ENCODE measurements at regions of chr16 and their contacts with region 1.

Region 1: GRCh38 chr16:71883849-71884638 is at the start of gene ZNF821:
- DNase-seq: peak; percentile 62 to 81 (median 68)
- ATAC-seq: peak; percentile 68
- H3K4me3 ChIP-seq: peak within 1 kb of the TSS; percentile 67
- H3K4me3 Mint-ChIP-seq: peak within 1 kb of the TSS; percentile 84 to 99 (median 96)
- H3K27ac ChIP-seq: peak within 1 kb of the TSS; percentile 84
- H3K27ac Mint-ChIP-seq: peak within 1 kb of the TSS; percentile 88 to 97 (median 95)
- H3K4me1 ChIP-seq: peaks cover 30 to 33% of the 10 kb centered on the region in 2 donors
- H3K4me1 Mint-ChIP-seq: peaks cover 44 to 56% (median 50%) of the 10 kb centered on the region in 7 donors
- H3K27me3 ChIP-seq: no peaks in the 10 kb centered on the region
- H3K27me3 Mint-ChIP-seq: peaks cover 0 to 20% (median 0%) of the 10 kb centered on the region in 5 donors
- total RNA-seq, gene ZNF821: 2.6 to 13.3 (median 7.0) TPM

Region 2: DNA sequence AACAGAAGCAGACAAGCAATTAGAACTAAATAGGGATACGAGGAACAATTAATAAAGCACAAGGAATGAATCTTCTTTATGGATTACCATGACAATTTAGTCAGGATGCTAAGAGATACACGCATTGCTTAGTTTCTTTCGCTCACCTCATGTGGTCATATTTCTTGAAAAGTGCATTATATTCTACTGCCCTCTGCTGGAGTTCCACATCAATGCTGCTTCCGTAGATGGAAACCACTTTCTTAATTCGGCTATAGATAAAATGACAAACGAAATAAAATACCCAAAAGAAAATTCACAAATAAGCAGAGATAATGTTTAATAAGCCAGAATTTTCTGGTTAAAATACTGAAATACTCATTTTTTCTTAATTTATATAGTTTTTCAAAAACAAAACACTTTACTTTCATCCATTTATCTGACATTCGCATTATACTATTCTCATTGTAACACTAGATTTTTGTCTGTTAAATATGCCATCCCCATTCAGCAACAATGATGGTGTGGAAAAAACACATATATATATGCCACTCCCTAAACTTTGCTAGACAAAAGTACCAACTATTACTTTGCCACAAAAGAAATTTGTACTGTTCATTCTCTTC is 137.5 kb before region 1 on chr16:
- CTCF ChIA-PET with region 1: no interaction called
- POLR2A ChIA-PET with region 1: interaction called, 3 read pairs
- intact Hi-C with region 1: loop called in 1 of 2 experiments (anchors 1 kb)
- DNase-seq: peak in 7 of 9 donors; percentile 14 to 59 (median 45)
- ATAC-seq: peak; percentile 82
- H3K4me3 ChIP-seq: no peak overlapping the region
- H3K4me3 Mint-ChIP-seq: no peak overlapping the region
- H3K27ac ChIP-seq: no peak overlapping the region
- H3K27ac Mint-ChIP-seq: peak overlapping the region in 1 of 9 donors; percentile 14
- H3K4me1 ChIP-seq: no peaks in the 10 kb centered on the region
- H3K4me1 Mint-ChIP-seq: peaks cover 0 to 5% (median 0%) of the 10 kb centered on the region in 7 donors
- H3K27me3 ChIP-seq: no peaks in the 10 kb centered on the region
- H3K27me3 Mint-ChIP-seq: no peaks in the 10 kb centered on the region

Region 3: GRCh38 chr16:71845639-71846430 is 38.2 kb before region 1 on chr16 and contains the start of gene ATXN1L:
- CTCF ChIA-PET with region 1: interaction called, 13 read pairs
- POLR2A ChIA-PET with region 1: interaction called, 27 read pairs
- intact Hi-C with region 1: loop called (anchors 1 kb)
- DNase-seq: peak; percentile 91 to 100 (median 95)
- ATAC-seq: peak; percentile 97
- H3K4me3 ChIP-seq: peak within 1 kb of the TSS; percentile 97
- H3K4me3 Mint-ChIP-seq: peak within 1 kb of the TSS; percentile 92 to 96 (median 94)
- H3K27ac ChIP-seq: peak within 1 kb of the TSS; percentile 92
- H3K27ac Mint-ChIP-seq: peak within 1 kb of the TSS; percentile 95 to 98 (median 97)
- H3K4me1 ChIP-seq: peaks cover 10 to 16% of the 10 kb centered on the region in 2 donors
- H3K4me1 Mint-ChIP-seq: peaks cover 18 to 50% (median 42%) of the 10 kb centered on the region in 7 donors
- H3K27me3 ChIP-seq: no peaks in the 10 kb centered on the region
- H3K27me3 Mint-ChIP-seq: no peaks in the 10 kb centered on the region
- total RNA-seq, gene ATXN1L: 24.6 to 52.9 (median 30.7) TPM

Region 4: GRCh38 chr16:71867939-71868338 is 16.1 kb before region 1 on chr16:
- CTCF ChIA-PET with region 1: interaction called, 9 read pairs
- POLR2A ChIA-PET with region 1: interaction called, 12 read pairs
- intact Hi-C with region 1: loop called (anchors 1 kb)
- DNase-seq: no peak
- ATAC-seq: no peak
- H3K4me3 ChIP-seq: no peak overlapping the region
- H3K4me3 Mint-ChIP-seq: no peak overlapping the region
- H3K27ac ChIP-seq: no peak overlapping the region
- H3K27ac Mint-ChIP-seq: peak overlapping the region in 1 of 9 donors; percentile 15
- H3K4me1 ChIP-seq: peaks cover 0 to 1% of the 10 kb centered on the region in 2 donors
- H3K4me1 Mint-ChIP-seq: peaks cover 9 to 24% (median 18%) of the 10 kb centered on the region in 7 donors
- H3K27me3 ChIP-seq: no peaks in the 10 kb centered on the region
- H3K27me3 Mint-ChIP-seq: no peaks in the 10 kb centered on the region

Region 5: DNA sequence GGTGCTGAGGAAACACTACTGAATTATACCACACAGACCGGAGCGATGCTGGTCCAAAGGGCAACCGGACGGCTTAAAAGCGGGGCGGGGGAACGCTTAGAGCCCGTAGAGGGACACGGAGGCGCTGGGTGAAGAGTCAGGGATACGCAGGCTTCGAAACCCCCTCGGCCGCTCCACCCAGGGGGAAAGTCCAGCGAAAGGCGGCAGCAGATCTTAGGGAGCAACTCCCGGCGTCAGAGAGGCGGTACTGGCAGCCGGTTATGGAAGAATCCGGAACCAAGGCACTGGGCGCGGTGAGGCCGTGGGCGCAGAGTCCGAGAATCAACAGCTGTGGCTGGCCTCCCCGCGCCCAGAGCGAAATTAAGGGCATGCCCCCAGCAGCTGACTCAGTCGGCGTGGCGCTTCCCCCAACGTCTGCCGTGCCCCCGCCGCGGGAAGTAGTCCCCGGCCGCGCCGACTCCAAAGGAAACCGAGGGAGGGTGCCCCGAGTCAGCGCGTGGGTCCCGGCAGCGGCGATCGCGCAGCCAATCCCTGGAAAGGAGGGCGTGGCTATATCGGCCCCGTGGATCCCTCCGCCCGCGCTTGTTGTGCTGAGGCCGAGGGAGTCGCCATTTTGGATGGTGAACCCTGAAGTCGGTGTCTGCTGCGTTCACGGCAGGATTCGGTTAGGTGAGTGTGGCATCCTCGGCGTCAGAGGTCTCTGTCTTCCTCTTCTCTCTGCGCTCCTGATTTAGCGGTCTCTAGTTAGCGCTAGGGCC is 11.1 kb after region 1 on chr16 and contains the start of gene IST1:
- CTCF ChIA-PET with region 1: interaction called, 44 read pairs
- POLR2A ChIA-PET with region 1: interaction called, 107 read pairs
- intact Hi-C with region 1: loop called (anchors 1 kb)
- DNase-seq: peak; percentile 88 to 98 (median 98)
- ATAC-seq: peak; percentile 97
- H3K4me3 ChIP-seq: peak within 1 kb of the TSS; percentile 99
- H3K4me3 Mint-ChIP-seq: peak within 1 kb of the TSS; percentile 95 to 99 (median 96)
- H3K27ac ChIP-seq: peak within 1 kb of the TSS; percentile 98
- H3K27ac Mint-ChIP-seq: peak within 1 kb of the TSS; percentile 92 to 98 (median 97)
- H3K4me1 ChIP-seq: peaks cover 22 to 25% of the 10 kb centered on the region in 2 donors
- H3K4me1 Mint-ChIP-seq: peaks cover 23 to 43% (median 30%) of the 10 kb centered on the region in 7 donors
- H3K27me3 ChIP-seq: no peaks in the 10 kb centered on the region
- H3K27me3 Mint-ChIP-seq: no peaks in the 10 kb centered on the region
- total RNA-seq, gene IST1: 176 to 303 (median 286) TPM

Region 6: GRCh38 chr16:72093448-72094265 is 209.6 kb after region 1 on chr16 and contains the starts of genes DHX38 and TXNL4B:
- CTCF ChIA-PET with region 1: no interaction called
- POLR2A ChIA-PET with region 1: no interaction called
- intact Hi-C with region 1: loop called in 1 of 2 experiments (anchors 5 kb)
- DNase-seq: peak; percentile 70 to 95 (median 92)
- ATAC-seq: peak; percentile 98
- H3K4me3 ChIP-seq: peak within 1 kb of the TSS; percentile 86
- H3K4me3 Mint-ChIP-seq: peak within 1 kb of the TSS; percentile 94 to 100 (median 98)
- H3K27ac ChIP-seq: peak within 1 kb of the TSS; percentile 93
- H3K27ac Mint-ChIP-seq: peak within 1 kb of the TSS; percentile 92 to 100 (median 99)
- H3K4me1 ChIP-seq: peaks cover 21 to 24% of the 10 kb centered on the region in 2 donors
- H3K4me1 Mint-ChIP-seq: peaks cover 33 to 70% (median 63%) of the 10 kb centered on the region in 7 donors
- H3K27me3 ChIP-seq: no peaks in the 10 kb centered on the region
- H3K27me3 Mint-ChIP-seq: no peaks in the 10 kb centered on the region
- total RNA-seq, gene DHX38: 90.1 to 113 (median 104) TPM
- total RNA-seq, gene TXNL4B: 12.5 to 20.9 (median 18.5) TPM

Region 7: GRCh38 chr16:73298562-73298961 is 1414.5 kb after region 1 on chr16:
- CTCF ChIA-PET with region 1: no interaction called
- POLR2A ChIA-PET with region 1: no interaction called
- intact Hi-C with region 1: no loop called
- DNase-seq: no peak
- ATAC-seq: no peak
- H3K4me3 ChIP-seq: no peak overlapping the region
- H3K4me3 Mint-ChIP-seq: no peak overlapping the region
- H3K27ac ChIP-seq: no peak overlapping the region
- H3K27ac Mint-ChIP-seq: peak overlapping the region in 1 of 9 donors; percentile 50
- H3K4me1 ChIP-seq: no peaks in the 10 kb centered on the region
- H3K4me1 Mint-ChIP-seq: peaks cover 0 to 4% (median 0%) of the 10 kb centered on the region in 7 donors
- H3K27me3 ChIP-seq: no peaks in the 10 kb centered on the region
- H3K27me3 Mint-ChIP-seq: no peaks in the 10 kb centered on the region

Measured in naive thymus-derived CD4-positive, alpha-beta T cell (primary cell).